A673 (cell line): ENCODE measurements at regions of chr2 and their contacts with region 1.

Region 1: GRCh38 chr2:233711312-233712008 is 1.2 kb upstream of the UGT1A5 start:
- DNase-seq: peak; percentile 90
- H3K4me3 ChIP-seq: no peak overlapping the region
- H3K27ac ChIP-seq: no peak overlapping the region
- H3K4me1 ChIP-seq: peaks cover 16% of the 10 kb centered on the region
- H3K27me3 ChIP-seq: no peaks in the 10 kb centered on the region
- CTCF ChIP-seq: peak; percentile 98

Region 2: DNA sequence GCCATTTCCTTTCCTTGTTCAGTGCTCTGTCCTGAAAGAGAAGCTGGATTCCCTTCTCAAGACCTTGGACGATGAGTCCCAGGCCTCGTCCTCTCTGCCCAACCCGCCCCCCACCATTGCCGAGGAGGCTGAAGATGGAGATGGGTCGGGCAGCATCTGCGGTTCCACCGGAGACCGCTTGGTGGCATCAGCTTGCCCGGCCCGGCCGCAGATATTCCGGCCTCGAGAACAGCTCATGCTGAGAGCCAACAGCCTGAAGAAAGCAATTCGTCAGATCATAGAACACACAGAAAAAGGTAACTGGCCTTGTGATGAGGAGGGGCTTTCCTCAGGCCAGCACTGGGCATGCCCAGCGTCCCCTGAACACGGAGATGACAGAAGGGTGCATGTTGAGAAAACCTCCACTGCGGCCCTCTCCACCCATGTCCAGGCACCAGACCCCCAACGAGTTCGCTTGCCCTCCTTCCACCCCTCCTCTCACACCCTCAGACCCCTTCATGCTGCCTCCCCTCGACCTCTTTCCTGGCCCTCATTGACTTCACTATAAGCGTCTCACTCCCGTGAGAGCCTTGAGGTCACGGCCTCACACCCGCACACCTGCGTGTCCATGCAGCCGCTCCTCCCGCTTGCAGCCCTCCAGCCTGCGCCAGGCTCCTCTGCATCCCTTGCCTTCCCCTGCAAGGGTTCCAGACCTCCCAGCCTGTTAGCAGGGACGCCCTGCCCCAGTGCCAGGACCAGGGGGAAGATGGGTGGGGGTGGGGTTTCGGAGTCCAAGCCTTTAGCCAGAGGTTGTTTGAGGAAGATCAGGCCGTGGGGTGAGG is 262.2 kb before region 1 on chr2:
- CTCF ChIA-PET with region 1: interaction called, 4 read pairs
- POLR2A ChIA-PET with region 1: no interaction called
- intact Hi-C with region 1: loop called (anchors 1 kb)
- DNase-seq: peak; percentile 74
- H3K4me3 ChIP-seq: no peak overlapping the region
- H3K27ac ChIP-seq: no peak overlapping the region
- H3K4me1 ChIP-seq: peaks cover 7% of the 10 kb centered on the region
- H3K27me3 ChIP-seq: no peaks in the 10 kb centered on the region
- CTCF ChIP-seq: peak; percentile 89